ENCODE measurements at regions of chr2 and their contacts with region 1.

Region 1: DNA sequence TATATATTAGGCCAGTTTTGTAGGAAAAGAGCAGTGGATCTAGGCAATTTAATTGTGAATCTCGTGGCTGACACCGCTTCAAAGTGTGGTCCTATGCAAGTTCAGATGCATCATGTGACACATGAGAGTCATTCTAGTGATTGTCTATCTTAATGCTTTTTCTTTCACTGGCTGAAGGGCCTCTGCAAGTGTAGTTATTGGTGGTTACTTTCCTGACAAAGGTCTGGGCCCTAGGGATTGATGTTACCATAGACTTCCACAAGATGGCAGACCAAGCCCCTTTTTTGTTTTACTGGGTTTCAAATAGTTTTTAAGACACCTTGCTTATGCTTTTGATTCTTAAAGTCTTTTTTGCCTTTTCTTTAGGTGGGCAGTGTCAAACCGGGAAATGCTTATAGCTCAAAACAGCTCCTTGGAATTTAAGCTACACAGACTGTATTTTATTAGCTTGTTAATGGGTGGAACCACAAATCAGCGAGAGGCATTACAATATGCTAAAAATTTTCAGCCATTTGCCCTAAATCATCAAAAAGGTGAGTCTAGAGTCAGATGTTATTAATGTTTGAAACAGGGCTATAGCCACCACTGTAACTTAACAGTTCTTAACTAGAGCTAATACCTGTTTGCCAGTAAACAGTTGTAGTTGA is 25.9 kb downstream of the CD8A start:
- DNase-seq: peak in 5 of 9 donors; percentile 22 to 47 (median 29)
- ATAC-seq: peak; percentile 74
- H3K4me3 ChIP-seq: no peak overlapping the region
- H3K4me3 Mint-ChIP-seq: no peak overlapping the region
- H3K27ac ChIP-seq: no peak overlapping the region
- H3K27ac Mint-ChIP-seq: peak overlapping the region in 3 of 9 donors; percentile 3 to 59 (median 3)
- H3K4me1 ChIP-seq: peaks cover 0 to 3% of the 10 kb centered on the region in 2 donors
- H3K4me1 Mint-ChIP-seq: peaks cover 3 to 26% (median 22%) of the 10 kb centered on the region in 7 donors
- H3K27me3 ChIP-seq: no peaks in the 10 kb centered on the region
- H3K27me3 Mint-ChIP-seq: no peaks in the 10 kb centered on the region

Region 2: DNA sequence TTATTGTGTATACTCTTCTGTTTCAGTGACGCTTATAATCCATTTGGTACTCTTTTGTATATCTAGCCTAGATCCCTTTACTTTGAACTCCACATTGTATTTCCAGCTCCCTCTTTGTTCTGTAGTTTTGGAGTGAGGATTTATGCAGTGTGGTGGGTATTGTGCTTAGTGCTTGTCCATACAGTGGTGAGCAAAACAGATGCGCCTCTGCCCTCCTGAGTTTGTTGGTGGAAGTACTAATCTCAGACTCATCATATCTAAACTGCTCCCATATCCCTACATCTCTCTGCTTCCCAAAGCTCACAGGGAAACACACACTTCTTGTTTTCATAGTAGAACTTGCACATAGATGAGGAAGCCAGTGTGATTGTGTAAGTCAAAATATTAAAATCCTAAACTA is 646.7 kb before region 1 on chr2:
- CTCF ChIA-PET with region 1: no interaction called
- POLR2A ChIA-PET with region 1: no interaction called
- intact Hi-C with region 1: no loop called
- DNase-seq: no peak
- ATAC-seq: no peak
- H3K4me3 ChIP-seq: no peak overlapping the region
- H3K4me3 Mint-ChIP-seq: no peak overlapping the region
- H3K27ac ChIP-seq: no peak overlapping the region
- H3K27ac Mint-ChIP-seq: no peak overlapping the region
- H3K4me1 ChIP-seq: no peaks in the 10 kb centered on the region
- H3K4me1 Mint-ChIP-seq: peaks cover 5 to 19% (median 9%) of the 10 kb centered on the region in 7 donors
- H3K27me3 ChIP-seq: no peaks in the 10 kb centered on the region
- H3K27me3 Mint-ChIP-seq: no peaks in the 10 kb centered on the region

Region 3: GRCh38 chr2:86518481-86518880 is 246.3 kb before region 1 on chr2:
- CTCF ChIA-PET with region 1: interaction called, 5 read pairs
- POLR2A ChIA-PET with region 1: no interaction called
- intact Hi-C with region 1: loop called in 1 of 2 experiments (anchors 2 kb)
- DNase-seq: peak in 7 of 9 donors; percentile 23 to 59 (median 53)
- ATAC-seq: peak; percentile 73
- H3K4me3 ChIP-seq: no peak overlapping the region
- H3K4me3 Mint-ChIP-seq: no peak overlapping the region
- H3K27ac ChIP-seq: no peak overlapping the region
- H3K27ac Mint-ChIP-seq: peak overlapping the region in 1 of 9 donors; percentile 2
- H3K4me1 ChIP-seq: no peaks in the 10 kb centered on the region
- H3K4me1 Mint-ChIP-seq: peaks cover 0 to 16% (median 8%) of the 10 kb centered on the region in 7 donors
- H3K27me3 ChIP-seq: no peaks in the 10 kb centered on the region
- H3K27me3 Mint-ChIP-seq: no peaks in the 10 kb centered on the region

Region 4: GRCh38 chr2:86753606-86754005 is 11.2 kb before region 1 on chr2:
- CTCF ChIA-PET with region 1: interaction called, 14 read pairs
- POLR2A ChIA-PET with region 1: no interaction called
- intact Hi-C with region 1: no loop called
- DNase-seq: no peak
- ATAC-seq: no peak
- H3K4me3 ChIP-seq: no peak overlapping the region
- H3K4me3 Mint-ChIP-seq: no peak overlapping the region
- H3K27ac ChIP-seq: no peak overlapping the region
- H3K27ac Mint-ChIP-seq: peak overlapping the region in 1 of 9 donors; percentile 54
- H3K4me1 ChIP-seq: no peaks in the 10 kb centered on the region
- H3K4me1 Mint-ChIP-seq: peaks cover 0 to 33% (median 20%) of the 10 kb centered on the region in 7 donors
- H3K27me3 ChIP-seq: no peaks in the 10 kb centered on the region
- H3K27me3 Mint-ChIP-seq: no peaks in the 10 kb centered on the region

Region 5: DNA sequence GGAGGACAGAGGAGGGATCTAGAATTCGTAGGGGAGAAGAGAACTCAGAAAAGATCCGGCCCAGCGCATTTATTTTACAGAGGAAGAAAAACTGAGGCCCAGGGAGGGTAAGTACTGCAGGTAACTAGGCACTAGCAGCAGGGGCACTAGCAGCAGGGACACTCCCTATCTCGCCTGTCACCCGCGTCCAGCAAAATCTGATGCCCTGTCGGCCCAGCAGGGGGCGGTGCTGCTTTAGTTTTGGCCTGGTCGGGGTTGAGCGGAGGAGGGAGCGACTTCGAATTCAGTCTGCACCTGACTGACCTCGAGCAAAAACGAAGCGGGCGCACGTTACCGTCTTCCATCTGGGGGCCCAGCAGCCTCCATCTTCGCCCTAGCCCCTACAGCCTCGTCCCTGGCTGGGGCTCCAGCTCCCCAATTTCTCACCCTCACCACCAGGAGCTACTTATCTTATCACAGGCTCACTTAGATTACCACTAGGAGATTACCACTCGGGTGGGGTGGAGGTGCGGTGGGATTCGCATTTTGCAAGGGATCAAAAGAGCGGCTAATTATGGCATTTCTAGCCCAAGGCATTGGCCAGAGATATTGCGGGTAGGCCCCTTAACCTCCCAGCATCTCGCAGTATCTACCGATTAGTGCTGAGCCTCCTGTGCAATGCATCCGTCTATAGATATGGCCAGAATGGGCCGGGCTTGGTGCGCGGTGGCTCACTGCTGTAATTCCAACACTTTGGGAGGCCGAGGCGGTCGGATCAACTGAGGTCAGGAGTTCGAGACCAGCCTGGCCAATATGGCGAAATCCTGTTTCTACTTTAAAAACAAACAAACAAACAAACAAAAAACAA is 43.8 kb after region 1 on chr2:
- CTCF ChIA-PET with region 1: interaction called, 5 read pairs
- POLR2A ChIA-PET with region 1: no interaction called
- intact Hi-C with region 1: loop called (anchors 1 to 2 kb)
- DNase-seq: peak; percentile 78 to 94 (median 88)
- ATAC-seq: peak; percentile 95
- H3K4me3 ChIP-seq: peak overlapping the region; percentile 46
- H3K4me3 Mint-ChIP-seq: peak overlapping the region; percentile 70 to 94 (median 88)
- H3K27ac ChIP-seq: no peak overlapping the region
- H3K27ac Mint-ChIP-seq: peak overlapping the region in 1 of 9 donors; percentile 28
- H3K4me1 ChIP-seq: peaks cover 17 to 42% of the 10 kb centered on the region in 2 donors
- H3K4me1 Mint-ChIP-seq: peaks cover 6 to 30% (median 21%) of the 10 kb centered on the region in 7 donors
- H3K27me3 ChIP-seq: no peaks in the 10 kb centered on the region
- H3K27me3 Mint-ChIP-seq: peaks cover 39 to 64% (median 45%) of the 10 kb centered on the region in 5 donors